ENCODE measurements at regions of chr12 and their contacts with region 1.

Region 1: DNA sequence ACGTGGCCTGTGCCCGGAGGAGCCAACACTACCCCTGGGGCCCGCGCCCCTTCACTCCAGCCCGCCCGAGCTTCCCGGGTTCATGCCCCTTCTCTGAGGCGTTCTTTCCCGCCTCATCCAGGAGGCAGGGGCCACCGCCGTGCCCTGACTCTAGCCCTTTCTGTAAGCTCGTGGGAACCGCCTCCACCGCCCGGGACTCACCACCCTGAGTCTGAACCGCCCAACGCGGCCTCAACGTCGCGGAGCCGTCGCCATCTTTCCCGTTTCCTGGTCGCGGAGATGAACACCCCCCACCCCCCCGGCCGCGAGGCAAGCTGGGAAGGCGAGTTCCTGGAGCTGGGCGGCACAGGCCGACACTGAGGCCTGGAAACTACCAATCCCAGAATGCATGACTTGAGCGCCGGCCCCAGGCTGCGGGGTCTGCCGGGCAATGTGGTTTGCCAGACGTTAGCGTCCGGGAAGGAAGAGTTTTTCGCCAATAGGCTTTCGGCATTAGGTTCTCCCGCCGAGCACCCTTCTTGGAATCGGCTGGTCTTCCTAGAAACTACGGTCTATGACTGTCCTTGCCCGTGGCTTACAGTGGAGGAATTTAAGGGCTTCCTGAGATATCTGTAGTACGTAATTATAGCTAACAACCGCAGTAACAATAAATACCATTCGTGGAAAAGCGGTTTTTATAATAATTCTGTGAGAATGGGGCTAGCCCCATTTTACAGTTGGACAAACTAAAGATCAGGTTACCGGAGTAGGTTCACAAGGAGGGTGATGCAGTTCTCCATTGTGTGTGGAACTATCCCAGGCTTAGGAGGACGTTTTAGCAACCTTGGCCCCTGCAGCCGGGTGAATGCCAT is at the start of gene DDX23:
- DNase-seq: peak; percentile 96
- ATAC-seq: peak; percentile 98
- H3K4me3 ChIP-seq: peak within 1 kb of the TSS; percentile 93
- H3K27ac ChIP-seq: peak within 1 kb of the TSS; percentile 93
- H3K4me1 ChIP-seq: peaks cover 18% of the 10 kb centered on the region
- H3K27me3 ChIP-seq: no peaks in the 10 kb centered on the region
- CTCF ChIP-seq: no peak
- total RNA-seq, gene DDX23: 77.2 TPM

Region 2: GRCh38 chr12:48542300-48542928 is 309.7 kb before region 1 on chr12:
- intact Hi-C with region 1: no loop called
- DNase-seq: peak; percentile 71
- ATAC-seq: peak; percentile 84
- H3K4me3 ChIP-seq: no peak overlapping the region
- H3K27ac ChIP-seq: no peak overlapping the region
- H3K4me1 ChIP-seq: no peaks in the 10 kb centered on the region
- H3K27me3 ChIP-seq: no peaks in the 10 kb centered on the region
- CTCF ChIP-seq: peak; percentile 64

Region 3: DNA sequence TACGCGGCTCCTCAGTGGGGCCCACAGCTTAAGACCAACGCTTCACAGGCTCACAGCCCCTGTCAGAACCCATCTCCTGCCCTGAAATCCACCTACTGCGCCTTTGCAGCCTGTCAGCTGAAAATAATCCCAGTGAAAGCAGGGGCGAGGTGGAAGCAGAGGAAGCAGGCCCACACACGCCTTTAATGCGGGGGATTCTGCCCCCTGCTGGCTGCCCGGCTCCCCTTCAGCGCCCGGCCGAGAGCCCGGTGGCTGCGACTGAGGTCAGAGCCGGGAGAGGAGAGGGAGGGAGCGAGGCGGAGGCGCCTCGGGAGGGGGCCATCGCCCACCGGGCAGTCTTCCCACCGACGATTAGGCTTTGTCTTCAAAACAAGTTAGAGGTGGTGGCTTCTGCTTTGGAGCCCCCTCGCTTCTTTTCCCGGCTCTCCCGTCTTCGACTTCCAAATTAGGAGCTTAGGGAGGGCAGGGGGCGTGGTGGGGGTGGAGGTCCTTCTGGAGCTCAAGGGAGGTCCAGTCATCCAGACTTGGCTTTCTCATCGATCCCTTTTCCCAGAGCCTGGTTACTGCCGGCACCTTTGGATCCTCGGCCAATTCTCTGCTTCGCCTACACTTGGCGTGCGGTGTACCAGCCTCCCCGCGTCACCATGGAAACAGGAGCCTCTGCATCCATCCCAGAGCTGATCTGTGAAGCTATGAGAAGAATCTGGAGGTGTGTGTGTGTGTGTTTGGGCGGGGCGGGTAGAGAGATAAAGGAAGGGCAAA is 38.7 kb after region 1 on chr12:
- intact Hi-C with region 1: loop called (anchors 5 kb)
- DNase-seq: peak; percentile 89
- ATAC-seq: peak; percentile 96
- H3K4me3 ChIP-seq: peak overlapping the region; percentile 21
- H3K27ac ChIP-seq: no peak overlapping the region
- H3K4me1 ChIP-seq: peaks cover 8% of the 10 kb centered on the region
- H3K27me3 ChIP-seq: peaks cover 18% of the 10 kb centered on the region
- CTCF ChIP-seq: peak; percentile 95

Region 4: GRCh38 chr12:48910196-48910595 is 58.1 kb after region 1 on chr12:
- intact Hi-C with region 1: no loop called
- DNase-seq: no peak
- ATAC-seq: no peak
- H3K4me3 ChIP-seq: no peak overlapping the region
- H3K27ac ChIP-seq: no peak overlapping the region
- H3K4me1 ChIP-seq: no peaks in the 10 kb centered on the region
- H3K27me3 ChIP-seq: no peaks in the 10 kb centered on the region
- CTCF ChIP-seq: no peak

Measured in upper lobe of right lung (tissue), 1 donor.